ENCODE measurements at regions of chr1 and their contacts with region 1.

Region 1: GRCh38 chr1:203751051-203751450 is 13.9 kb upstream of the LAX1 start:
- DNase-seq: peak; percentile 82
- ATAC-seq: peak; percentile 89
- H3K4me3 ChIP-seq: no peak overlapping the region
- H3K27ac ChIP-seq: no peak overlapping the region
- H3K4me1 ChIP-seq: peaks cover 4% of the 10 kb centered on the region
- H3K27me3 ChIP-seq: no peaks in the 10 kb centered on the region
- CTCF ChIP-seq: 0 out of 2 replicates have a peak, but pooled peaks have one; percentile 8
- POLR2A ChIP-seq: no peak
- RAD21 ChIP-seq: no peak

Region 2: GRCh38 chr1:203795441-203796235 is 44.6 kb after region 1 on chr1 and contains the starts of genes ZBED6 and ZC3H11A:
- CTCF ChIA-PET with region 1: no interaction called
- POLR2A ChIA-PET with region 1: no interaction called
- dilution Hi-C with region 1: no loop called
- in situ Hi-C with region 1: no loop called
- intact Hi-C with region 1: loop called (anchors 1 kb)
- DNase-seq: peak; percentile 98
- ATAC-seq: peak; percentile 97
- H3K4me3 ChIP-seq: peak within 1 kb of the TSS; percentile 86
- H3K27ac ChIP-seq: peak within 1 kb of the TSS; percentile 81
- H3K4me1 ChIP-seq: peaks cover 12% of the 10 kb centered on the region
- H3K27me3 ChIP-seq: no peaks in the 10 kb centered on the region
- CTCF ChIP-seq: no peak
- POLR2A ChIP-seq: peak; percentile 88
- RAD21 ChIP-seq: no peak
- total RNA-seq, gene ZBED6: 16.1 and 26.2 TPM in 2 replicates
- total RNA-seq, gene ZC3H11A: 66.5 and 106 TPM in 2 replicates